Activated naive CD4-positive, alpha-beta T cell treated with anti-CD3 and anti-CD28 coated beads for 36 hours (primary cell): ENCODE measurements at regions of chr7 and their contacts with region 1.

Region 1: GRCh38 chr7:43439631-43440401 is 143.1 kb upstream of the STK17A start:
- DNase-seq: peak; percentile 72
- H3K4me3 Mint-ChIP-seq: no peak overlapping the region
- H3K27ac Mint-ChIP-seq: no peak overlapping the region
- H3K4me1 Mint-ChIP-seq: peaks cover 5% of the 10 kb centered on the region
- H3K27me3 Mint-ChIP-seq: no peaks in the 10 kb centered on the region

Region 2: GRCh38 chr7:43175570-43176200 is 264.1 kb before region 1 on chr7:
- CTCF ChIA-PET with region 1: no interaction called
- intact Hi-C with region 1: loop called (anchors 5 kb)
- DNase-seq: no peak
- H3K4me3 Mint-ChIP-seq: no peak overlapping the region
- H3K27ac Mint-ChIP-seq: no peak overlapping the region
- H3K4me1 Mint-ChIP-seq: no peaks in the 10 kb centered on the region
- H3K27me3 Mint-ChIP-seq: peaks cover 5% of the 10 kb centered on the region

Region 3: GRCh38 chr7:43454936-43455518 is 15.2 kb after region 1 on chr7:
- CTCF ChIA-PET with region 1: interaction called, 11 read pairs
- intact Hi-C with region 1: no loop called
- DNase-seq: no peak
- H3K4me3 Mint-ChIP-seq: no peak overlapping the region
- H3K27ac Mint-ChIP-seq: no peak overlapping the region
- H3K4me1 Mint-ChIP-seq: no peaks in the 10 kb centered on the region
- H3K27me3 Mint-ChIP-seq: no peaks in the 10 kb centered on the region